ENCODE measurements at regions of chr3 and their contacts with region 1.

Region 1: DNA sequence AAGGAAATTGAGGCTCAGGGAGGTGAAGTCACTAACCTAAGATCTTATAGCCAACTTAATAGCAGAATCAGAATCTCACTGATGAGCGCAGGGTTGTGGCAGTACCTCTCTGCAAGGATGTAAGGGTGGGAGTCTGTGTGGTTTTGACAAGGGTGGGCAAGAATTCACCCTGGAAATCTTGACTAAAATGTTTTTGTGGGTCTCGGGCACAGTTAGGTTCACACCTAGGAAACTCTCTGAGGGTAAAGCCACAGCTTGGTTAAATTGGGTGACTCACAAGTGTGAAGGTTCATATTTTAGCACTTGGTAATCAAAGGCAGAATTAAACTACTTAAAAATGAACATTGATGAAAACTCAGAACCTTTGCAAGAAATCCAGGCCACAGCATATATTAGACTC is 178.2 kb upstream of the EOMES start:
- DNase-seq: peak; percentile 24
- H3K4me3 Mint-ChIP-seq: peak overlapping the region; percentile 2
- H3K27ac Mint-ChIP-seq: peak overlapping the region; percentile 24
- H3K4me1 Mint-ChIP-seq: peaks cover 56% of the 10 kb centered on the region
- H3K27me3 Mint-ChIP-seq: peaks cover 4% of the 10 kb centered on the region

Region 2: DNA sequence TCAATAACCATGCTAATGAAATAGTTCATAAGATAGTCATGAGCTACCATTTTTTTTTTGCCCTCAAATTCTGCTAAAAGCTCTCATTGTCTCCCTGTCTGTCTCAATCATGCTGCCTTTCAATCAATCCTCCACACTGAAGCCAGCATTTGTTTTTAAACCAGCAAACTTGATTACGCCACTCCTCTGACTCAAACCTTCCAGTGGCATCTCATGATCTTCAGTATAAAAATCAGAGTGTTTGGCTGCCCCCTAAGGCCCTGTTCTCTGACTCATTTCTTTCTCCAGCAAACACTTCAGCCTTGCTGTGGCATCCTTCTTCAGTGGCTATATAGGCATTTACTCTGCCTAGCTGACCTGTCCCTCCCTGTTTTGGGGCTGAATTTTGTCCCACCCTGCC is 142.2 kb before region 1 on chr3:
- intact Hi-C with region 1: loop called (anchors 2 kb)
- DNase-seq: no peak
- H3K4me3 Mint-ChIP-seq: no peak overlapping the region
- H3K27ac Mint-ChIP-seq: peak overlapping the region; percentile 72
- H3K4me1 Mint-ChIP-seq: peaks cover 23% of the 10 kb centered on the region
- H3K27me3 Mint-ChIP-seq: peaks cover 3% of the 10 kb centered on the region

Region 3: DNA sequence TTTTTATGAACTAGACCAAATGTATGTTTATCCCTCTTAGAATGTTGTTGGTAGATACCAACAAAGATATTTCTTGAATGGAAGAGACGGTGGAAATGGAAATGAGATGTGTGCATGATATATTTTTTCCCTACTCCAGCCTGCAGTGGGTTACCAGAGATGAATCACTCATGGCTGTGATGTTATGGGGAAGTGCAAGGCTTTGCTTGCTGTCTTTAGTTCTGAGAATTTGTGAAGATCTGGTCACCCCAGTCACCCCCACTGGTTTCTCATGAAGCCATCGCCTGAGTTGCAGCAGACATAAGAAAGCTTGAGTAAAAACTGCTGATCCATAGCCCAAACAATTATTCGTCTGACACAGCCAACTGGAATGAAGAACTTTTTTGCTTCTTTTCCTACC is 100.1 kb before region 1 on chr3:
- intact Hi-C with region 1: loop called (anchors 5 kb)
- DNase-seq: no peak
- H3K4me3 Mint-ChIP-seq: no peak overlapping the region
- H3K27ac Mint-ChIP-seq: peak overlapping the region; percentile 0
- H3K4me1 Mint-ChIP-seq: peaks cover 17% of the 10 kb centered on the region
- H3K27me3 Mint-ChIP-seq: no peaks in the 10 kb centered on the region

Region 4: GRCh38 chr3:27848826-27849225 is 51.5 kb before region 1 on chr3:
- intact Hi-C with region 1: loop called (anchors 1 kb)
- DNase-seq: no peak
- H3K4me3 Mint-ChIP-seq: no peak overlapping the region
- H3K27ac Mint-ChIP-seq: peak overlapping the region; percentile 73
- H3K4me1 Mint-ChIP-seq: peaks cover 19% of the 10 kb centered on the region
- H3K27me3 Mint-ChIP-seq: no peaks in the 10 kb centered on the region

Region 5: DNA sequence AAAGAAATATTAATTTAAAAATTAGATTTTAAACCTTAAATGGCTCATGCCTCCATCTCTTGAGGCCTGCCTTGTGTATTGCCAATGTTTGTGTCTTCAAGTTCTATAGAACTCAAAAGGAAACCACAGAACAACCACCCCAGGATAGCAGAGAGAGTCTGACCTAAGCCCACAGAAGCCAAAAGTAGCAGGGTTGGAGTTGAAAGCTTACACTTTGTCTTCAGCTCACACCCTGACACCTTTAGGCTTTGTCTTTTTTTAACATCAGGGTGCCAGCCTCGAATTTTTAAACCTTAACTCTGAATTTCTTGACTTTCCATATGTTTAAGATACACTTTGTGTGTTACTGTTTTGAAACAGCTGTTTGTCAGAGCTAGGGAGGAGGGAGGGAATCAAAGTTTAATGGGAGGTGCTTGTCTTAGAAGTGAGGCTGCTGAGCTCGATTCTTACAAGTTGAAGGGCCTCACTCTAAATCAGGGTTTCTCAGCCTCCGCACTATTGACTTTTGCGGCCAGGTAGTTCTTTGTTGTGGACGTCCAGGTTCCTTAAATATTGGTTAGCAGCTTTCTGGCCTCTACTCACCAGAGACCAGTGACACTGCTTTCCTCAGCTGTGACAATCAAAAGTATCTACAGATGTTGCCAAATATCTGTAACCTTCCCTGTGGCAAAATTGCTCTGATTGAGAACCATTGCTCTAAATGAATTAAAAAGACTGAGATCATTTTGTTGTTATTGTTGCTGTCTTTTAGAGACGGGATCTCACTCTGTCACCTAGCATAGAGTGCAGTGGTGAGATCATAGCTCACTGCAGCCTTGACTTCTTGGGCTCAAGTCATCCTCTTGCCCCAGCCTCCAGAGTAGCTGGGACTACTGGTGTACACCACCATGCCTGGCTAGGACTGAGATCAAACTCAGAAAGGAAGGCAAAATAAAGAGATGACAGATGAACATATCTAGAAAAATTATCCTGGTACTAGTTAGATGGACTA is 39.0 kb before region 1 on chr3:
- intact Hi-C with region 1: loop called (anchors 2 kb)
- DNase-seq: peak; percentile 42
- H3K4me3 Mint-ChIP-seq: peak overlapping the region; percentile 47
- H3K27ac Mint-ChIP-seq: peak overlapping the region; percentile 87
- H3K4me1 Mint-ChIP-seq: peaks cover 38% of the 10 kb centered on the region
- H3K27me3 Mint-ChIP-seq: no peaks in the 10 kb centered on the region

Measured in activated T-helper 1 cell treated with anti-CD3 and anti-CD28 coated beads, Interleukin-12 subunit alpha, Interleukin-12 subunit beta, Interleukin-2, Interleukin-4 antibody, amounts not matched to agents 30 ng/mL and 10 ng/mL and 1 ng/mL, durations not matched to agents 14 hours and 24 hours and 36 hours (primary cell).